HCT116 (cell line): ENCODE measurements at regions of chr10 and their contacts with region 1.

Region 1: GRCh38 chr10:120948889-120949608 is 97.9 kb downstream of the WDR11 start:
- DNase-seq: peak; percentile 48
- ATAC-seq: peak; percentile 100
- H3K4me3 ChIP-seq: peak overlapping the region in 1 of 2 experiments; percentile 36; a peak in 2 of 4 replicates
- H3K27ac ChIP-seq: no peak overlapping the region
- H3K4me1 ChIP-seq: peaks cover 0 to 4% of the 10 kb centered on the region in 2 experiments; a peak in 2 of 4 replicates
- H3K27me3 ChIP-seq: no peaks in the 10 kb centered on the region; the same call in 1 of the 2 replicates
- CTCF ChIP-seq: peak; percentile 80 to 95 (median 85)
- POLR2A ChIP-seq: no peak
- RAD21 ChIP-seq: peak; percentile 98

Region 2: DNA sequence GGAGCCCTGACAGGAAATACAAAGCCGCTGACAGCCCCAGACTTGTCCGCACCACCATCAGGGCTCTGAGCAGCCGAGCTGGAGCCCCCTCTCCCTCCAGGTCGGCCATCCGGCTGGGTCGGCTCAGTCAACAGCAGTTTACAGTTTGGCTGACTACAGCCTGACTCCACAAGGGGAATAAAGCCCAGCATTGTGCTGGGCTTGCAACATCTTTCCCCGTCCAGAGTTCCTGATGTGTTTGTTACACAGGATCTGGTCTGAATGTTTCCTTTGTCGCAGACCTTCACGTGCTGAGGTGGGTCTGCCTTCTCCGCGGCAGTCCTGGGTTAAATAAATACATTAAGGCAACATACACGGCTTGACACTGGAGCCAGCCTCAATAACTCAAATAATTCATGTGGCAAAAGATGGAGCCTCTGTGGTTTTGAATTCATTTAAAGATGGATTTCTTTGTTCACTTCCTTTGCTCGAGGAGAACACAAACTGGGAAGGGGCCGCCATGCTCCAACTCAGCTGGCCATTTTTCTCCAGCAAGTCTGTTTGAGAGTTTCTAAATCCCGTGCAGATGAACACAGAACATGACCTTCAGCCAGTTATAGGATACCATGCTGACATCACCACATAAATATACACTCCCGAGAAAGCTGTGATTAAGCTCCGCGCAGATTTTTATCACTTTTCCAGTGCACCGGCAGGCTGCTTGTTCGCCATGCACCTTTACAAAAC is 94.2 kb after region 1 on chr10:
- CTCF ChIA-PET with region 1: no interaction called
- POLR2A ChIA-PET with region 1: no interaction called
- RAD21 ChIA-PET with region 1: no interaction called
- intact Hi-C with region 1: no loop called
- DNase-seq: no peak
- ATAC-seq: no peak
- H3K4me3 ChIP-seq: no peak overlapping the region
- H3K27ac ChIP-seq: no peak overlapping the region
- H3K4me1 ChIP-seq: no peaks in the 10 kb centered on the region
- H3K27me3 ChIP-seq: no peaks in the 10 kb centered on the region; the same call in 1 of the 2 replicates
- CTCF ChIP-seq: no peak
- POLR2A ChIP-seq: no peak
- RAD21 ChIP-seq: no peak

Region 3: GRCh38 chr10:121069061-121069850 is 120.2 kb after region 1 on chr10:
- CTCF ChIA-PET with region 1: interaction called, 10 read pairs
- POLR2A ChIA-PET with region 1: no interaction called
- RAD21 ChIA-PET with region 1: no interaction called
- intact Hi-C with region 1: loop called (anchors 5 kb)
- DNase-seq: peak; percentile 32
- ATAC-seq: no peak
- H3K4me3 ChIP-seq: no peak overlapping the region
- H3K27ac ChIP-seq: no peak overlapping the region
- H3K4me1 ChIP-seq: peaks cover 0 to 12% of the 10 kb centered on the region in 2 experiments; a peak in 2 of 4 replicates
- H3K27me3 ChIP-seq: no peaks in the 10 kb centered on the region
- CTCF ChIP-seq: no peak
- POLR2A ChIP-seq: no peak
- RAD21 ChIP-seq: no peak

Region 4: DNA sequence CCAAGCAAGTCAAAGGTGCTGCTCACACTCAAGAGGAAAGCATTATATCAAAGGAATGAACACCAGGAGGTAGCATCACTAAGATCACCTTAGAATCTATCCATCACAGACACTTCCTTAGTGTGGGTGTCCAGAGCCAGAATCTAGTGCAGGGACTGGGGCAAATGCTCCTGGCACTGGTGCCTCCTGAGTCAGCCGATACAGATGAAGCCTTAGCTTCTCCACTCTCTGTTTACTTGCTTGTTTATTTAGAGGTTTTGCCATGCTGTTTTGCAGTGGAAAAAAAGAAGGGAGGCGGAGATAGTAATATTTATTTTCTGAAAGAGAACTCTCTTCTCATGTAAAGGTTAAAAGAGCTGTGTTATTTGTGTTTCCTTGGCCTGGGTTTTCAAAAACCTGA is 205.3 kb after region 1 on chr10:
- CTCF ChIA-PET with region 1: no interaction called
- POLR2A ChIA-PET with region 1: no interaction called
- RAD21 ChIA-PET with region 1: no interaction called
- intact Hi-C with region 1: no loop called
- DNase-seq: no peak
- ATAC-seq: no peak
- H3K4me3 ChIP-seq: no peak overlapping the region
- H3K27ac ChIP-seq: no peak overlapping the region
- H3K4me1 ChIP-seq: peaks cover 13 to 20% of the 10 kb centered on the region in 2 experiments
- H3K27me3 ChIP-seq: no peaks in the 10 kb centered on the region
- CTCF ChIP-seq: no peak
- POLR2A ChIP-seq: no peak
- RAD21 ChIP-seq: no peak

Region 5: GRCh38 chr10:121608469-121609190 is 659.6 kb after region 1 on chr10:
- CTCF ChIA-PET with region 1: interaction called, 11 read pairs
- POLR2A ChIA-PET with region 1: interaction called, 3 read pairs
- RAD21 ChIA-PET with region 1: interaction called, 3 to 4 read pairs
- intact Hi-C with region 1: loop called (anchors 2 kb)
- DNase-seq: peak; percentile 43
- ATAC-seq: peak; percentile 95
- H3K4me3 ChIP-seq: peak overlapping the region; percentile 17 to 18
- H3K27ac ChIP-seq: no peak overlapping the region; the same call in 1 of the 2 replicates
- H3K4me1 ChIP-seq: peaks cover 7 to 17% of the 10 kb centered on the region in 2 experiments; a peak in 3 of 4 replicates
- H3K27me3 ChIP-seq: no peaks in the 10 kb centered on the region
- CTCF ChIP-seq: peak; percentile 90 to 98 (median 93)
- POLR2A ChIP-seq: no peak
- RAD21 ChIP-seq: peak; percentile 91

Region 6: GRCh38 chr10:121734589-121735045 is 785.6 kb after region 1 on chr10:
- CTCF ChIA-PET with region 1: interaction called, 8 read pairs
- POLR2A ChIA-PET with region 1: no interaction called
- RAD21 ChIA-PET with region 1: no interaction called
- intact Hi-C with region 1: loop called (anchors 1 kb)
- DNase-seq: peak; percentile 19
- ATAC-seq: peak; percentile 64
- H3K4me3 ChIP-seq: no peak overlapping the region
- H3K27ac ChIP-seq: no peak overlapping the region
- H3K4me1 ChIP-seq: no peaks in the 10 kb centered on the region
- H3K27me3 ChIP-seq: no peaks in the 10 kb centered on the region
- CTCF ChIP-seq: peak; percentile 85 to 90 (median 89)
- POLR2A ChIP-seq: no peak
- RAD21 ChIP-seq: peak; percentile 78

Region 7: GRCh38 chr10:121900443-121901174 is 951.6 kb after region 1 on chr10:
- CTCF ChIA-PET with region 1: interaction called, 19 read pairs
- POLR2A ChIA-PET with region 1: no interaction called
- RAD21 ChIA-PET with region 1: interaction called in 1 of 2 experiments, 3 read pairs
- intact Hi-C with region 1: loop called (anchors 1 kb)
- DNase-seq: peak; percentile 52
- ATAC-seq: peak; percentile 96
- H3K4me3 ChIP-seq: no peak overlapping the region
- H3K27ac ChIP-seq: no peak overlapping the region
- H3K4me1 ChIP-seq: no peaks in the 10 kb centered on the region
- H3K27me3 ChIP-seq: no peaks in the 10 kb centered on the region
- CTCF ChIP-seq: peak; percentile 70 to 97 (median 71); a peak in 5 of 6 replicates
- POLR2A ChIP-seq: no peak
- RAD21 ChIP-seq: peak; percentile 83